ENCODE measurements at regions of chr17 and their contacts with region 1.

Region 1: DNA sequence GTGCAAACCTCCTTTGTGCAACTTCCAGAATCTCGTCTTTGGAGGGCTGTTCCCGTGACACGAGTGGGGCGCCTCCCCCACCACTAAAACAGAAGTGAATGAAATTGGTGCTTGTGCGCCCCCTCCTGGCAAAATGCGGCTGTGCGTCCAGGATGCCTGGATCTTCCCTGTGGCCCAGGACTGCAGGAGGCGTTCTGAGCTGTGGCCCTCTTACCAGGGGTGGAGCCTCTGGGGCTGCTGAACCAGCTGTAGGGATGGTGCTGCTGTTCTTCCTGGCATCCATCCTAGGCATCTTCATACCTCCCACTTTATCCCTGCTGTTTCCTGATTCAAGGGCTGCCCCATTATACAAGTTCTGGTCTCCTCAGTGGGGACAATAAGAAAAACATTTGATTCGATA is 18.5 kb upstream of the NAGLU start:
- DNase-seq: peak; percentile 91
- ATAC-seq: peak; percentile 83
- H3K4me3 Mint-ChIP-seq: no peak overlapping the region
- H3K27ac Mint-ChIP-seq: no peak overlapping the region
- H3K4me1 Mint-ChIP-seq: peaks cover 19% of the 10 kb centered on the region
- H3K27me3 Mint-ChIP-seq: peaks cover 4% of the 10 kb centered on the region
- CTCF ChIP-seq: peak; percentile 88

Region 2: DNA sequence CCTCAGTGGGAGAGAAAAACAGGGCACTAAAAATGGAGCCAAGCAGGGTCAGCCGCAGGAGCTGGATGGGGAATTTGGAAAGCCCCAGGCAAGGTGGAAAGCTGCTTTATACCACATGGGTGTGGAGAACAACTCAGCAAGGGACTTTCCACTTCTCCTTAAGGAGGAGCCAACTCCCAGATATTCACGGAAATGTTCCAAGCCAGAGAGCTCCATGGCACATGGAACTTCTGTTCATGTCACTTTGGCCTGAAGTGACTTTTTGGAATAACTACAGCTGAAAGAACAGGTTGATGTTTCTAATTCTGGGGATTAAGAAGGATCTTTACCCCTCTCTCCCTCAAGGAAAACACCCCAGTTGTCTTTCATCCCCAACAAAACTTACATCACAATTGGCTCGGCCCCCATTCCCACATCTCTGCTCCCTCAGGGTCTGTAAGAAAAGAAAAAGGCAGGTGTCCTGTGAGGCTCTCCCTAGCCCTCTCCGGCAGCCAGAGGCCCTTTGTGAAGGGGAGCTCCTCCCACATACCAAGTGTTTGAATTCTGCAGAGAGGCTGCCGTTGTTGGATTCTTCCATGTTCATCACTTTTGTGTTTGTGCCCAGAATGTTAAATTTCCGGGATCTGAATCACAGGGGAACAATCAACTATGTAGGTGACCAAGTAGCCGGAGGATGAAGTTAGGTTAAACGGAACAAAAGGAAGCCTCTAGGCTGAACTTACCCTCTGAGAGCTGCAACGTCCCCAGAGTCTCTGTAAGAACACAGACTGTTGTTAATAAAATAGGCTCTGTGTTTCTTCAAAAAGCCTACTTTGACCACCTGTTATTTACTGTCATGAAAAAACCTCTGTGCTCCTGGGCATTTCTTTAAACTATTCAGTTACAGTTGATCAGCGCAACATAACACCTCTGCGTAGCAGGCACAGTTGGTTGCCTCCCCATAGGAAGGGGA is 188.2 kb before region 1 on chr17:
- CTCF ChIA-PET with region 1: interaction called, 10 read pairs
- POLR2A ChIA-PET with region 1: no interaction called
- DNase-seq: peak; percentile 76
- ATAC-seq: peak; percentile 99
- H3K4me3 Mint-ChIP-seq: peak overlapping the region; percentile 38
- H3K27ac Mint-ChIP-seq: peak overlapping the region; percentile 97
- H3K4me1 Mint-ChIP-seq: peaks cover 30% of the 10 kb centered on the region
- H3K27me3 Mint-ChIP-seq: no peaks in the 10 kb centered on the region; the same call in 1 of the 2 replicates
- CTCF ChIP-seq: no peak

Region 3: GRCh38 chr17:42388381-42389134 is 129.0 kb before region 1 on chr17 and contains the start of gene STAT3:
- CTCF ChIA-PET with region 1: interaction called, 13 read pairs
- POLR2A ChIA-PET with region 1: no interaction called
- DNase-seq: peak; percentile 100
- ATAC-seq: peak; percentile 97
- H3K4me3 Mint-ChIP-seq: peak within 1 kb of the TSS; percentile 94
- H3K27ac Mint-ChIP-seq: peak within 1 kb of the TSS; percentile 98
- H3K4me1 Mint-ChIP-seq: peaks cover 41% of the 10 kb centered on the region
- H3K27me3 Mint-ChIP-seq: no peaks in the 10 kb centered on the region
- CTCF ChIP-seq: no peak
- total RNA-seq, gene STAT3: 74.4 to 98.0 TPM (median 74.9 TPM) in 3 replicates

Region 4: GRCh38 chr17:42422958-42423712 is 94.4 kb before region 1 on chr17 and contains the start of gene CAVIN1:
- CTCF ChIA-PET with region 1: interaction called, 30 read pairs
- POLR2A ChIA-PET with region 1: interaction called, 4 read pairs
- DNase-seq: peak; percentile 97
- ATAC-seq: peak; percentile 86
- H3K4me3 Mint-ChIP-seq: peak within 1 kb of the TSS; percentile 95
- H3K27ac Mint-ChIP-seq: peak within 1 kb of the TSS; percentile 93
- H3K4me1 Mint-ChIP-seq: peaks cover 31% of the 10 kb centered on the region
- H3K27me3 Mint-ChIP-seq: peaks cover 57% of the 10 kb centered on the region
- CTCF ChIP-seq: no peak
- total RNA-seq, gene CAVIN1: 24.6 to 28.4 TPM (median 27.8 TPM) in 3 replicates

Region 5: DNA sequence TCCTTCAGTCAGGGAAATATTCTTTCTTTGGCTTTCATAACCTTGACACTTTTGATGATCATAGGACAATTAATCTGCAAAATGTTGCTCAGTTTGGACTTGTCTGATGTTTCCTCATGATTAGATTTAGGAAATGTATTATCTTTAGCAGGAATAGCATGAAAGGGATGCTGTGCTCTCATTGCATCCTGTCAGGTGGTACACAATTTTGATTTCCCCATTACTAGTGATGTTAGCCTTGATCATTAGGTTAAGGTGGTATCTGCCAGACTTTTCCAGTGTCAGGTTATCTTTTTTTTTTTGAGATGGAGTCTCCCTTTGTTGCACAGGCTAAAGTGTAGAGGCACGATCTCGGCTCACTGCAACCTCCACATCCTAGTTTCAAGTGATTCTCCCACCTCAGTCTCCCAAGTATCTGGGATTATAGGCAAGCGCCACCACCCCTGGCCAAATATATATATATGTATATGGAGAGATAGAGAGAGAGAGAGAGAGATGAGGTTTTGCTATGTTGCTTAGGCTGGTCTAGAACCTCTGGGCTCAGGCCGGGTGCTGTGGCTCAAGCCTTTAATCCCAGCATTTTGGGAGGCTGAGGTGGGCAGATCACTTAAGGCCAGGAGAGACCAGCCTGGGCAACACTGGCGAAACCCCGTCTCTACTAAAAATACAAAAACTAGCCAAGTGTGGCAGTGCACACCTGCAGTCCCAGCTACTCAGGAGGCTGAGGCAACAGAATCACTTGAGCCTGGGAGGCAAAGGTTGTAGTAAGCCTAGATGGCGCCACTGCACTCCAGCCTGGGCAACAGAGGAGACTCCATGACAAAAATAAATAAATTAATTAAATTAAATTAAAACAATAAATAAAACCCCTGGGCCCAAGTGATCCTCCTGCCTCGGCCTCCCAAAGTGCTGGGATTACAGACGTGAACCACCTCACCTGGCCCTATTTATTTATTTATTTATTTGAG is 78.6 kb before region 1 on chr17:
- CTCF ChIA-PET with region 1: interaction called, 15 read pairs
- POLR2A ChIA-PET with region 1: no interaction called
- DNase-seq: peak; percentile 50
- ATAC-seq: peak; percentile 64
- H3K4me3 Mint-ChIP-seq: no peak overlapping the region
- H3K27ac Mint-ChIP-seq: no peak overlapping the region
- H3K4me1 Mint-ChIP-seq: peaks cover 8% of the 10 kb centered on the region
- H3K27me3 Mint-ChIP-seq: no peaks in the 10 kb centered on the region
- CTCF ChIP-seq: no peak

Region 6: GRCh38 chr17:42536048-42536371 is 18.5 kb after region 1 on chr17 and contains the start of gene NAGLU:
- CTCF ChIA-PET with region 1: interaction called, 19 read pairs
- POLR2A ChIA-PET with region 1: interaction called, 6 read pairs
- DNase-seq: peak; percentile 86
- ATAC-seq: peak; percentile 90
- H3K4me3 Mint-ChIP-seq: peak within 1 kb of the TSS; percentile 74
- H3K27ac Mint-ChIP-seq: peak within 1 kb of the TSS; percentile 85
- H3K4me1 Mint-ChIP-seq: peaks cover 31% of the 10 kb centered on the region
- H3K27me3 Mint-ChIP-seq: peaks cover 22% of the 10 kb centered on the region
- CTCF ChIP-seq: no peak
- total RNA-seq, gene NAGLU: 28.9 to 39.3 TPM (median 30.4 TPM) in 3 replicates

Region 7: GRCh38 chr17:42548070-42548837 is 30.7 kb after region 1 on chr17:
- CTCF ChIA-PET with region 1: interaction called, 18 read pairs
- POLR2A ChIA-PET with region 1: interaction called, 3 read pairs
- DNase-seq: peak; percentile 97
- ATAC-seq: peak; percentile 87
- H3K4me3 Mint-ChIP-seq: peak overlapping the region; percentile 59
- H3K27ac Mint-ChIP-seq: no peak overlapping the region
- H3K4me1 Mint-ChIP-seq: peaks cover 15% of the 10 kb centered on the region
- H3K27me3 Mint-ChIP-seq: peaks cover 2% of the 10 kb centered on the region; the same call in 1 of the 2 replicates
- CTCF ChIP-seq: no peak; the same call in 1 of the 2 replicates

Measured in WTC11 (cell line).